Activated CD4-positive, alpha-beta T cell treated with anti-CD3 and anti-CD28 coated beads, Interleukin-2, amount 10 ng/mL, durations not matched to agents 24 days and 14 days (primary cell): ENCODE measurements at regions of chrX and their contacts with region 1.

Region 1: GRCh38 chrX:73943693-73944562 is 360.1 kb upstream of the ZCCHC13 start:
- DNase-seq: peak; percentile 95
- H3K4me3 Mint-ChIP-seq: peak overlapping the region; percentile 86
- H3K27ac Mint-ChIP-seq: peak overlapping the region; percentile 90
- H3K4me1 Mint-ChIP-seq: peaks cover 18% of the 10 kb centered on the region
- H3K27me3 Mint-ChIP-seq: no peaks in the 10 kb centered on the region

Region 2: DNA sequence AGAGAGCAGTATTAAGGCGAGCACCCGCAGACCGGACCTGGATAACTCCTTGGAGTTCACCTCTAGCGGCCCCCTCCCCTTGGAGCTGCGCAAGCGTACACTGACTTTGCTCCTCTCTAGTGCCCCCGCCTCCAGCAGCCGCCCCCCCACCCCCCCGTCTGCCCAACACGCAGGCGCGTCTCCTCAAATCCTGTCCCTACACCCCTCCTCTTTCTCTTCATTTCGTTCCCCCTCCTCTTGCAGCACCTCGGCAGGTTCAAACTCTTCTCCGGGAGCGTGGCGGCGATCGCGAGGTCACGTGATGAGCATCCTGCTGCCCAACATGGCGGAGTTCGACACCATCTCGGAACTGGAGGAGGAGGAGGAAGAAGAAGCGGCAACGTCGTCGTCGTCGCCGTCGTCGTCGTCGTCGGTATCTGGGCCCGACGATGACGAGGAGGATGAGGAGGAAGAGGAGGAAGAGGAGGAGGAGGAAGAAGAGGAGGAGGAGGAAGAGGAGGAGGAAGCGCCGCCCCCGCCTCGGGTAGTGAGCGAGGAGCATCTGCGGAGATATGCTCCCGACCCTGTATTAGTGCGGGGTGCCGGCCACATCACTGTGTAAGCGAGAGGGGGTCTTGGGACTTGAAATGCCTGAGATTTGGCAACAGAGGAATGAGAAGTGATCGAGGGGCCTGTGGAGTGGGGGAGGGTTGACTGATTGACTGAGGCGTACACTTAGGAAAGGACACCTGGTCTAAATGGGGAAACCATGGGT is 380.8 kb before region 1 on chrX and contains the start of gene CHIC1:
- intact Hi-C with region 1: loop called (anchors 10 kb)
- DNase-seq: peak; percentile 90
- H3K4me3 Mint-ChIP-seq: peak within 1 kb of the TSS; percentile 88
- H3K27ac Mint-ChIP-seq: peak within 1 kb of the TSS; percentile 92
- H3K4me1 Mint-ChIP-seq: peaks cover 11% of the 10 kb centered on the region
- H3K27me3 Mint-ChIP-seq: no peaks in the 10 kb centered on the region
- total RNA-seq, gene CHIC1: 4.8 and 5.4 TPM in 2 replicates

Region 3: DNA sequence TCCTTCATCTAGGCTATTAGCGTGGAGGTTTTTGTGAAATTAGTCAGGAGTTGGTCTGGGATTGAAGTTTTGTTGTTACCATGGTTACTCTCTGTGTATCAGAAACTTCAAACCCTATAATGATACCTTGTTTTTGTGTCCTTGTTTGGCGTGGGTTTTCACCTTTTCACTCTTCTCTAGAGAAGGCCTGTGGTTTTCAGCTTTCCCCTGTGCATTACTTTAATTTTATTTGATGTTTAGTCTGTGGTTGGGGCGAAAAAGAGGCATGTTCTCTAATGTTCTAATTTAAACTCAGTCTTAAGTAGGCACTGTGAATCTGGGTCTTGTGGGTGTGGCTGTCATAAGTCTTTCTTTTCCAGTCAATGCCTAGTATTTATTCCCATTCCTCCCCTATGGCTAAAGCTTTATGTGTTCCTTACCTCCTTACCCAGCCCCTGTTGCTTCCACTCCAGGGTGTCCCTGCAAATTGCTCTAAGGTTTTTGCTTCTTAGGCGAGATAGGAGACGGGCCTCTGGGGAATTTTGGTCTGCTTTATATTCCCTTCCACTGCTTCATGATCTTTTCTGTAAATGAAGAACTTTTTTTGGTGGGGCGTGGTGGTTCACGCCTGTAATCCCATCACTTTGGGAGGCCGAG is 33.7 kb after region 1 on chrX:
- intact Hi-C with region 1: loop called (anchors 2 kb)
- DNase-seq: peak; percentile 68
- H3K4me3 Mint-ChIP-seq: peak overlapping the region; percentile 52
- H3K27ac Mint-ChIP-seq: peak overlapping the region; percentile 78
- H3K4me1 Mint-ChIP-seq: peaks cover 8% of the 10 kb centered on the region
- H3K27me3 Mint-ChIP-seq: no peaks in the 10 kb centered on the region